ENCODE measurements at regions of chr10 and their contacts with region 1.

Region 1: GRCh38 chr10:91493313-91493712 is 83.2 kb downstream of the HECTD2 start:
- DNase-seq: no peak
- H3K4me3 Mint-ChIP-seq: no peak overlapping the region
- H3K27ac Mint-ChIP-seq: no peak overlapping the region
- H3K4me1 Mint-ChIP-seq: no peaks in the 10 kb centered on the region
- H3K27me3 Mint-ChIP-seq: no peaks in the 10 kb centered on the region
- CTCF ChIP-seq: no peak

Region 2: GRCh38 chr10:91298224-91298871 is 195.0 kb before region 1 on chr10:
- CTCF ChIA-PET with region 1: no interaction called
- intact Hi-C with region 1: loop called (anchors 5 kb)
- DNase-seq: peak; percentile 71
- H3K4me3 Mint-ChIP-seq: peak overlapping the region; percentile 44
- H3K27ac Mint-ChIP-seq: no peak overlapping the region
- H3K4me1 Mint-ChIP-seq: peaks cover 8% of the 10 kb centered on the region
- H3K27me3 Mint-ChIP-seq: no peaks in the 10 kb centered on the region
- CTCF ChIP-seq: peak; percentile 64

Region 3: GRCh38 chr10:91551856-91552255 is 58.5 kb after region 1 on chr10:
- CTCF ChIA-PET with region 1: interaction called, 5 read pairs
- intact Hi-C with region 1: loop called (anchors 2 kb)
- DNase-seq: peak; percentile 27
- H3K4me3 Mint-ChIP-seq: no peak overlapping the region
- H3K27ac Mint-ChIP-seq: no peak overlapping the region
- H3K4me1 Mint-ChIP-seq: peaks cover 37% of the 10 kb centered on the region
- H3K27me3 Mint-ChIP-seq: no peaks in the 10 kb centered on the region
- CTCF ChIP-seq: peak; percentile 50

Region 4: DNA sequence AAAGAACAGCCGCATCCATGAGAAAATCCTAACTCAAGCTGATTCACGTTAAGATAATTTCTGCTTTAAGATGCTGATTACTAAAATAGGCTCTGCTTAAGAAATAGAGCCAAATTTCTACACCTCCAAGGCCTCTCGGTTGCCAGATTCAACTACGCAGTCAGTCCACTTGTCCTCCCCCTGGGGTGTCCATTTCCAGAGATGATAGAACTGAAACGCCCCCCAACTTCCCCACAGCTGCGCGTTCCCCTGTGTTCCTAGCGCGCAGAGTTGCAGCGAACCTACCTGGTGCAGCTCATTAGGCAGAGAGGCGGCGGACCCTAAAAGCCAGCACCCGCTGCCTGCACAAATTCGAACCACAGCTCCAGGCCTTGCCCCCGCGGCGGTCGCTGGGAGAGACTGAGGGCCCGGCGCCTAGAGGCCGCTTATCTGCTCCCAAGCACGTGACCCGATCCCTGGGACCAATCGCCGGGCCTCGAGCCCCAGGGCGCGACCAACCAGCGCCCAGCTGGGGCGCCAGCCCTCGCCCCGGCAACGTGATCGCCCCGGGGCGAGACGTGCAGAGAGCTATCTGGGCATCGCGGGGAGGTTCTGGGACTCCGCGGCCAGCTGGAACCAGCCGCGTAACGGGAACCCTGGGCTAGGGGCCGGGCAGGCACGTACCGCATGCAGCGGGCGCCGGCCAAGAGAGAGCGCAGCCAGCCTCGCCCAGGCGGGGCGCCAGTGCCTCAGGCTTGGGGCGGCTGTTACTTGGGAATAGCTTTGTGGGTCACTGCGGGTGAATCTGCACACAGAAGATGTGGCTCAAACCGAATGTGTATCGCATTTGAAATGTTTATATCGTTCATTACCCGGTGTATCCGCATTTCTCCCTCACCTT is 139.6 kb after region 1 on chr10 and contains the start of gene PPP1R3C:
- CTCF ChIA-PET with region 1: interaction called, 12 read pairs
- intact Hi-C with region 1: loop called (anchors 1 kb)
- DNase-seq: peak; percentile 84
- H3K4me3 Mint-ChIP-seq: peak within 1 kb of the TSS; percentile 92
- H3K27ac Mint-ChIP-seq: peak within 1 kb of the TSS; percentile 41
- H3K4me1 Mint-ChIP-seq: peaks cover 15% of the 10 kb centered on the region
- H3K27me3 Mint-ChIP-seq: no peaks in the 10 kb centered on the region
- CTCF ChIP-seq: no peak
- total RNA-seq, gene PPP1R3C: 5.5 and 7.8 TPM in 2 replicates

Region 5: GRCh38 chr10:91745074-91745832 is 251.9 kb after region 1 on chr10:
- CTCF ChIA-PET with region 1: interaction called, 6 read pairs
- intact Hi-C with region 1: loop called (anchors 2 kb)
- DNase-seq: peak; percentile 44
- H3K4me3 Mint-ChIP-seq: no peak overlapping the region
- H3K27ac Mint-ChIP-seq: no peak overlapping the region
- H3K4me1 Mint-ChIP-seq: no peaks in the 10 kb centered on the region
- H3K27me3 Mint-ChIP-seq: peaks cover 18% of the 10 kb centered on the region
- CTCF ChIP-seq: peak; percentile 20

Region 6: GRCh38 chr10:91908337-91909116 is 415.2 kb after region 1 on chr10:
- CTCF ChIA-PET with region 1: no interaction called
- intact Hi-C with region 1: loop called (anchors 5 kb)
- DNase-seq: peak; percentile 76
- H3K4me3 Mint-ChIP-seq: peak overlapping the region; percentile 79
- H3K27ac Mint-ChIP-seq: no peak overlapping the region
- H3K4me1 Mint-ChIP-seq: peaks cover 20% of the 10 kb centered on the region
- H3K27me3 Mint-ChIP-seq: peaks cover 10% of the 10 kb centered on the region
- CTCF ChIP-seq: no peak

Measured in Calu3 (cell line).